IMR-90 (cell line): ENCODE measurements at regions of chr5 and their contacts with region 1.

Region 1: DNA sequence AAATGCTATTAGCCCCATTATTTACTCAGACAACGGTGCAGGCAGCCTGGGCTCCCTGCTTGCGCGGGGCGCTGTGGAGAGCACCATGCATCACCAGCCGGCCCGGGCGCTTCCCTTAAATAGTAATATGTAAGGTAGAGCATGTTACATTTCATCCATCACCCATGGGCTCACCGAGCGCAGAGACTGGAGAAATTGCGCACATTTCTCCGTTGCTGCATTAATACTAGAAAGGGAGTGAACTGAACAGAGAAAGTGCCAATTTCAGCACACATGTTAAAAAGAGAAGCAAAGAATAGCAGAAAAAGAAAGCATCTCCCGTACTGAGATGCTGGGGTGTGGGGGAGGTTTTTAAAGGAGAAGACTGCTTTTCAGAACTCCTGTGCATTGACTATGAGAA is 400.3 kb downstream of the ZSWIM6 start:
- DNase-seq: no peak
- ATAC-seq: peak; percentile 70
- H3K4me3 ChIP-seq: no peak overlapping the region
- H3K27ac ChIP-seq: no peak overlapping the region
- H3K4me1 ChIP-seq: no peaks in the 10 kb centered on the region
- H3K27me3 ChIP-seq: peaks cover 15% of the 10 kb centered on the region
- CTCF ChIP-seq: no peak
- POLR2A ChIP-seq: no peak
- RAD21 ChIP-seq: no peak

Region 2: DNA sequence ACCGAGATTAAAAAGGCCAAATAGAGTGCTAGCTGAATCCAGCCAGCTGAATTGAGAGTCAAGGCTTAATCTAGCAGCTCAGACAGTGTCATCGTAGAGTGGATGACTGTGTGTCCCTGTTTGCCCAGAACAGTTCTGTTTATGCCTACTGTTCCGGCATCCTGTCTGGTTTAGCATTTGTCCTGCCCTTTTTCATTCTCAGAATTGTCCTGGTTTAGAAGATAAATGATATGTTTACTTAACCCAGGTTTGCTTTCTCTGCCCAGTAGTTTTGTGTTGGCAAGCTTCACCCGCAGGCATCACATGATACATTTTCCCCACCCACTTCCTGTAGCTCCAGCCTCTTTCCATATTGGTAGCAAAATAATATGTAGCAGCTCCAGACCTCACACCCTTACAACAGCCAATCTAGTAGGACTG is 441.6 kb before region 1 on chr5:
- CTCF ChIA-PET with region 1: no interaction called
- POLR2A ChIA-PET with region 1: no interaction called
- dilution Hi-C with region 1: no loop called
- in situ Hi-C with region 1: no loop called
- intact Hi-C with region 1: no loop called
- DNase-seq: no peak
- ATAC-seq: peak; percentile 60
- H3K4me3 ChIP-seq: no peak overlapping the region
- H3K27ac ChIP-seq: peak overlapping the region; percentile 43; the same call in 1 of the 2 replicates
- H3K4me1 ChIP-seq: peaks cover 17% of the 10 kb centered on the region
- H3K27me3 ChIP-seq: no peaks in the 10 kb centered on the region
- CTCF ChIP-seq: no peak
- POLR2A ChIP-seq: no peak
- RAD21 ChIP-seq: no peak

Region 3: GRCh38 chr5:61866930-61867329 is 134.6 kb after region 1 on chr5:
- CTCF ChIA-PET with region 1: no interaction called
- POLR2A ChIA-PET with region 1: no interaction called
- dilution Hi-C with region 1: no loop called
- in situ Hi-C with region 1: no loop called
- intact Hi-C with region 1: no loop called
- DNase-seq: peak; percentile 38
- ATAC-seq: no peak
- H3K4me3 ChIP-seq: no peak overlapping the region
- H3K27ac ChIP-seq: no peak overlapping the region
- H3K4me1 ChIP-seq: no peaks in the 10 kb centered on the region
- H3K27me3 ChIP-seq: no peaks in the 10 kb centered on the region
- CTCF ChIP-seq: no peak
- POLR2A ChIP-seq: no peak
- RAD21 ChIP-seq: no peak

Region 4: GRCh38 chr5:62412537-62413329 is 680.4 kb after region 1 on chr5 and contains the start of gene IPO11:
- CTCF ChIA-PET with region 1: no interaction called
- POLR2A ChIA-PET with region 1: interaction called, 21 read pairs
- dilution Hi-C with region 1: no loop called
- in situ Hi-C with region 1: no loop called
- intact Hi-C with region 1: no loop called
- DNase-seq: peak; percentile 99
- ATAC-seq: peak; percentile 98
- H3K4me3 ChIP-seq: peak within 1 kb of the TSS; percentile 56
- H3K27ac ChIP-seq: peak within 1 kb of the TSS; percentile 18; the same call in 1 of the 2 replicates
- H3K4me1 ChIP-seq: no peaks in the 10 kb centered on the region; the same call in 1 of the 2 replicates
- H3K27me3 ChIP-seq: no peaks in the 10 kb centered on the region
- CTCF ChIP-seq: no peak
- POLR2A ChIP-seq: peak; percentile 76
- RAD21 ChIP-seq: no peak
- total RNA-seq, gene IPO11: 34.4 and 40.0 TPM in 2 replicates